ENCODE measurements at regions of chr2 and their contacts with region 1.

Region 1: DNA sequence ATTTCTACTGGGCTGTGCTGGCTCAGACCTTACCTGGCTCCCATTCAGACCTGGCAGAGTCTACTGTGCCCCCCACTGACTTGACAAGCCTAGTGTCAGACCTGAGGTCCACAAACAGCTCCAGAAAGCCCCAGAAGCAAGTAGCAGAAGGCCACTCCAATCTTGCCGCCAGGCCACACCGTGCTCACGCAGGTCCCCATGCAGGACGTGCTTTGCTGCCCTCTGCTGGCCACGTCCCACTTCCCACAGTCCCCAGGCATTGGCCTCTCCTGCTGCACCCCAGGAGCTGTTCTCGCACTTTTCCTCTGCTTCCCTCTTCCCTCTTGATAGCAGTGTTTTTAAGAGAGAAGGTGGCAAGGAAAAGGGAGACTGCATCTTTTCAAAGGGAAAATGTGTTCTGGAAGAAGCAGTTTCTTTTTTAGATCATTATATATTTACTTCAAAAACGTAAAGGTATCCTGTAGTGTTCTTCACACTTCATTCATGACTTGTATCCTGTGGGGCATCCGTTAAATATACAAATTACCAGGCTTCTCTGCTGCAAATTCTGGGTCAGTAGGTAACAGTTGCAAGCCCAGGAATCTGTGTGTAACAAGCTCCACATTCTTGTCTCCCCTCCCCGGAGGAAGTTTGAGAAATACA is 81.4 kb upstream of the PAPOLG start:
- DNase-seq: peak; percentile 88
- CTCF ChIP-seq: peak; percentile 98

Region 2: GRCh38 chr2:60560734-60561644 is 113.7 kb before region 1 on chr2:
- CTCF ChIA-PET with region 1: interaction called, 24 read pairs
- POLR2A ChIA-PET with region 1: no interaction called
- DNase-seq: peak; percentile 41
- CTCF ChIP-seq: peak; percentile 62

Region 3: GRCh38 chr2:60621688-60622429 is 52.8 kb before region 1 on chr2:
- CTCF ChIA-PET with region 1: no interaction called
- POLR2A ChIA-PET with region 1: no interaction called
- DNase-seq: no peak
- CTCF ChIP-seq: no peak

Region 4: GRCh38 chr2:60641811-60642788 is 32.5 kb before region 1 on chr2:
- CTCF ChIA-PET with region 1: interaction called, 10 read pairs
- POLR2A ChIA-PET with region 1: no interaction called
- DNase-seq: peak; percentile 46
- CTCF ChIP-seq: peak; percentile 72

Region 5: GRCh38 chr2:60659026-60659425 is 15.6 kb before region 1 on chr2:
- CTCF ChIA-PET with region 1: interaction called, 69 read pairs
- POLR2A ChIA-PET with region 1: no interaction called
- DNase-seq: no peak
- CTCF ChIP-seq: no peak

Region 6: GRCh38 chr2:60693551-60693950 is 18.9 kb after region 1 on chr2:
- CTCF ChIA-PET with region 1: interaction called, 30 read pairs
- POLR2A ChIA-PET with region 1: no interaction called
- DNase-seq: no peak
- CTCF ChIP-seq: no peak

Region 7: GRCh38 chr2:60699617-60700016 is 25.0 kb after region 1 on chr2:
- CTCF ChIA-PET with region 1: interaction called, 30 read pairs
- POLR2A ChIA-PET with region 1: no interaction called
- DNase-seq: no peak
- CTCF ChIP-seq: no peak